ENCODE measurements at regions of chr16 and their contacts with region 1.

Region 1: DNA sequence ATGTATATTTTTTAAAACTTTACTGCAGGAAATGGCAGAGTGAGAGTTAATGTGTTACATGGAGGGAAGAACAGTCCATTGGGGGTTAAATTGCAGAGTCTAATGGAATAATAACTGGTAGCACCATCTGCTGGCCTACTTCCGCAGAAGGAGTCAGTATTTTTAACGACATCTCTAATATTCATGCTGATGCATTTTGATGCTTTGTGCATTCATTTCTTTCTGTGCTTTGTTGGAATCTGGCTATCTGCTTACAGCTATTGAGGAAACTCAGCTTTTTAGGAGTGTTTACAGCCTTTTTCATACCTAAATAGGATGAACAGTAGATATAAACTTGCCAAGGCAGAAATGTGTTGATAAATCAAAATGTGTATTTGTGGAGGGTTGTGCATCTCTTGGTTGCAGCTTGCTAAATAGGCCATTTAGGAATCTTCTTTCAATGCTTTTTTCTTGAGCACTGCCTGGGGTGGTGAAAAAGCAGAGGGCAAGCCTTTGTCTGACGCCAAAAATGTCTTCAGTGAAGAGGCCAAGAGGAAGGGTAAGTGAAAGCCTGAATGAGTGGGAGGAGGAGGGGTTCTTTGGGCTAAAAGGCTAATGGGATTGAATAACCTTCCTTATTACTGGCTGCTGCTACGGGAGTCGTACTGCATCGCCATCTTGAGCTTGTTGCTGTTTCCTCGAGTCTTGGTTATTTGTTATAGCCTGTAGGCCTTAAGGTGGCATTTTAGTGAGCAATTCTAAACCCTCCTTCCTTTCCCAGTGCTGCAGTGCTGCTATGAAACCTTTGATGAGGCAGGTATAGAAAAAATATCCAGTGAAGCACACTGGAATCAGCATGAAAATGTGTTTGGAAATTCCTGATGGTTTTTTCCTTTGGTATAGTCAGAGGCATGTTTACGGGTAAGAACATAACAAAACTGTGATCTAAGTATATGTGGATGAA is 153.3 kb downstream of the CHD9 start:
- DNase-seq: peak; percentile 78 to 95
- H3K4me3 ChIP-seq: peak overlapping the region; percentile 36
- H3K4me1 ChIP-seq: peaks cover 11% of the 10 kb centered on the region
- H3K27me3 ChIP-seq: no peaks in the 10 kb centered on the region

Region 2: GRCh38 chr16:53054670-53055485 is 153.2 kb before region 1 on chr16 and contains the start of gene CHD9:
- in situ Hi-C with region 1: loop called (anchors 25 kb)
- DNase-seq: peak; percentile 81 to 87
- H3K4me3 ChIP-seq: peak within 1 kb of the TSS; percentile 75
- H3K4me1 ChIP-seq: peaks cover 13% of the 10 kb centered on the region
- H3K27me3 ChIP-seq: no peaks in the 10 kb centered on the region